ENCODE measurements at regions of chr2 and their contacts with region 1.

Region 1: GRCh38 chr2:97806738-97807618 is 93.6 kb downstream of the ZAP70 start:
- DNase-seq: peak; percentile 12
- H3K4me3 ChIP-seq: no peak overlapping the region
- H3K27ac ChIP-seq: no peak overlapping the region
- H3K4me1 ChIP-seq: peaks cover 0 to 8% (median 0%) of the 10 kb centered on the region in 3 donors
- H3K27me3 ChIP-seq: no peaks in the 10 kb centered on the region
- CTCF ChIP-seq: peak; percentile 88 to 95 (median 94)
- POLR2A ChIP-seq: no peak

Region 2: GRCh38 chr2:97995734-97996624 is 189.0 kb after region 1 on chr2 and contains the start of gene TMEM131:
- intact Hi-C with region 1: loop called (anchors 10 kb)
- DNase-seq: peak; percentile 79
- H3K4me3 ChIP-seq: peak within 1 kb of the TSS; percentile 67 to 94 (median 92)
- H3K27ac ChIP-seq: peak within 1 kb of the TSS; percentile 96 to 99 (median 97)
- H3K4me1 ChIP-seq: peaks cover 0 to 67% (median 23%) of the 10 kb centered on the region in 3 donors
- H3K27me3 ChIP-seq: no peaks in the 10 kb centered on the region
- CTCF ChIP-seq: no peak
- POLR2A ChIP-seq: peak in 2 of 4 donors; percentile 45 to 88
- total RNA-seq, gene TMEM131: 24.2 to 36.4 (median 28.1) TPM

Region 3: GRCh38 chr2:98269830-98270229 is 462.9 kb after region 1 on chr2:
- intact Hi-C with region 1: loop called (anchors 10 kb)
- DNase-seq: no peak
- H3K4me3 ChIP-seq: no peak overlapping the region
- H3K27ac ChIP-seq: peak overlapping the region in 3 of 4 donors; percentile 1 to 21 (median 13)
- H3K4me1 ChIP-seq: peaks cover 0 to 4% (median 0%) of the 10 kb centered on the region in 3 donors
- H3K27me3 ChIP-seq: no peaks in the 10 kb centered on the region
- CTCF ChIP-seq: no peak
- POLR2A ChIP-seq: no peak

Region 4: DNA sequence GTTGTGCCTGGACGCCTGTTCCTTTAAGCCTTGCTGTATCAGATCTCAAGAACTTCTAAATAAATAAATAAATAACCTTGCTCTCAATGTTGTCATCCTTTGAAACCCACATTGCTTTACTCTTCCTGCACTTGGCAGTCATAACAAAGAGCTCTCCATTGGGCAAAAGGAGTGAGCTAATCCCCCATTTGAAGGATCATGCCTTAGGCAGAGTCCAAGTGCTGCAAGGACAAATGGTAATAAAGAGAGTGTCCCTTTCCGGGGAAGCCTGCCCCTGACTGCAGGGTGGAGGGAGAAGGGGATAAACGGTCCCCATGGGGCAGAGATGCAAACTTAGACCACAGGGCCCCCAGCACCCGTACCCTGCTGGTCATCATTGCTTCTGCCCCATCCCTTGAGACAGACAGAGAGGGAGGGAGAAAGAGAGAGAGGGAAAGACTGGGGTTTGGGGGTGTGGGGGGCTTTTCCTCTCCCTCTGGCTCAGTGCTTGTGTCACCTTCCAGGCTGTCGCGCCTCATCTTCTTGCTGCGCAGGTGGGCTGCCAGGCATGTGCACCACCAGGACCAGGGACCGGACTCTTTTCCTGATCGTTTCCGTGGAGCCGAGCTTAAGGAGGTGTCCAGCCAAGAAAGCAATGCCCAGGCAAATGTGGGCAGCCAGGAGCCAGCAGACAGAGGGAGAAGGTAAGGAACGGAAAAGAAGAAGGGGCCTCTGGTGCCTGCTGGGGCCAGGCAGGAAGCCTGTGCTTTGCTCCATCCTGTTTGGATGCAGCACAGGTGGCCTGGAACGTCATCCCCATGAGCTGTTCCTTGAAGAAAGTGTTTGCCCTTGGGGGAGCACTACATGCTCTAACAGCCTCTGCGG is 572.9 kb after region 1 on chr2:
- intact Hi-C with region 1: loop called (anchors 5 kb)
- DNase-seq: no peak
- H3K4me3 ChIP-seq: no peak overlapping the region
- H3K27ac ChIP-seq: no peak overlapping the region
- H3K4me1 ChIP-seq: peaks cover 0 to 11% (median 9%) of the 10 kb centered on the region in 3 donors
- H3K27me3 ChIP-seq: peaks cover 0 to 44% (median 0%) of the 10 kb centered on the region in 4 donors
- CTCF ChIP-seq: no peak
- POLR2A ChIP-seq: no peak

Measured in esophagus squamous epithelium (tissue), 5 donors.